ENCODE measurements at regions of chr2 and their contacts with region 1.

Region 1: GRCh38 chr2:42086500-42086953 is 38.7 kb downstream of the PKDCC start:
- DNase-seq: peak; percentile 64
- H3K4me3 ChIP-seq: no peak overlapping the region
- CTCF ChIP-seq: peak; percentile 62

Region 2: GRCh38 chr2:41859615-41860520 is 226.7 kb before region 1 on chr2:
- in situ Hi-C with region 1: loop called (anchors 5 kb)
- DNase-seq: no peak
- H3K4me3 ChIP-seq: no peak overlapping the region
- CTCF ChIP-seq: no peak

Region 3: DNA sequence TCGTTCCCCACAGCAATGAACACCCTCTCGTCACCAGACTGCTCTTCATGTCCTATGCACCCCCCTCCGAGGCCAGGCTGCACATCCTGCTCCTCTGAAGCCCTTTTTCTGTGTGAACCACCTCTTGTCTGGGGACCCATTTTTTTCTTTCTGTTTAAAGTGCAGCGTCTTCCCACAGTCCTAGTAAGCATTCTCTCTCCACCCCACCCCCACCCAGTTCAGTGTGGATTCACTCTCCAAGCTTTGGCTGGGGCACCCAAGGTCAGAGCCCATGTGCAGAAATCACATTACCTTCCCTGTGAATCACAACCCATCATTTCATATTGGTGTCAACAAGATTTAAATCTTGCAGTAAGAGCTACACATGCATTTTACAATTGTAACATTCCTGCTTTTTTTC is 65.1 kb before region 1 on chr2:
- in situ Hi-C with region 1: loop called (anchors 5 kb)
- DNase-seq: no peak
- H3K4me3 ChIP-seq: no peak overlapping the region
- CTCF ChIP-seq: no peak